ENCODE measurements at regions of chr2 and their contacts with region 1.

Region 1: GRCh38 chr2:60867848-60868247 is 13.5 kb upstream of the REL start:
- DNase-seq: peak; percentile 73
- H3K4me3 ChIP-seq: no peak overlapping the region
- H3K27ac ChIP-seq: no peak overlapping the region
- H3K4me1 ChIP-seq: peaks cover 5% of the 10 kb centered on the region
- H3K27me3 ChIP-seq: no peaks in the 10 kb centered on the region
- CTCF ChIP-seq: no peak

Region 2: GRCh38 chr2:60989259-60989658 is 121.4 kb after region 1 on chr2:
- CTCF ChIA-PET with region 1: no interaction called
- POLR2A ChIA-PET with region 1: interaction called, 12 read pairs
- intact Hi-C with region 1: no loop called
- DNase-seq: no peak
- H3K4me3 ChIP-seq: no peak overlapping the region
- H3K27ac ChIP-seq: no peak overlapping the region
- H3K4me1 ChIP-seq: no peaks in the 10 kb centered on the region
- H3K27me3 ChIP-seq: no peaks in the 10 kb centered on the region
- CTCF ChIP-seq: no peak

Measured in A673 (cell line).